ENCODE measurements at regions of chr5 and their contacts with region 1.

Region 1: GRCh38 chr5:177446200-177447065 is at the start of gene PRR7:
- DNase-seq: peak; percentile 67
- H3K4me3 ChIP-seq: peak within 1 kb of the TSS; percentile 35 to 56 (median 48)
- H3K27ac ChIP-seq: peak within 1 kb of the TSS in 3 of 4 donors; percentile 51 to 56 (median 53)
- H3K4me1 ChIP-seq: peaks cover 18 to 22% (median 20%) of the 10 kb centered on the region in 4 donors
- H3K27me3 ChIP-seq: peaks cover 23% of the 10 kb centered on the region
- CTCF ChIP-seq: no peak
- EP300 ChIP-seq: no peak
- POLR2A ChIP-seq: peak; percentile 40
- total RNA-seq, gene PRR7: 2.1 to 5.0 (median 2.5) TPM in 3 of 4 donors, not detected in the other

Region 2: GRCh38 chr5:176415952-176416924 is 1030.2 kb before region 1 on chr5 and contains the start of gene CLTB:
- in situ Hi-C with region 1: no loop called
- intact Hi-C with region 1: no loop called
- DNase-seq: peak; percentile 95
- H3K4me3 ChIP-seq: peak within 1 kb of the TSS; percentile 80 to 98 (median 88)
- H3K27ac ChIP-seq: peak within 1 kb of the TSS; percentile 93 to 97 (median 94)
- H3K4me1 ChIP-seq: peaks cover 8 to 51% (median 40%) of the 10 kb centered on the region in 4 donors
- H3K27me3 ChIP-seq: no peaks in the 10 kb centered on the region
- CTCF ChIP-seq: peak; percentile 41 to 78 (median 61)
- EP300 ChIP-seq: no peak
- POLR2A ChIP-seq: peak; percentile 42
- total RNA-seq, gene CLTB: 167 to 272 (median 265) TPM

Region 3: DNA sequence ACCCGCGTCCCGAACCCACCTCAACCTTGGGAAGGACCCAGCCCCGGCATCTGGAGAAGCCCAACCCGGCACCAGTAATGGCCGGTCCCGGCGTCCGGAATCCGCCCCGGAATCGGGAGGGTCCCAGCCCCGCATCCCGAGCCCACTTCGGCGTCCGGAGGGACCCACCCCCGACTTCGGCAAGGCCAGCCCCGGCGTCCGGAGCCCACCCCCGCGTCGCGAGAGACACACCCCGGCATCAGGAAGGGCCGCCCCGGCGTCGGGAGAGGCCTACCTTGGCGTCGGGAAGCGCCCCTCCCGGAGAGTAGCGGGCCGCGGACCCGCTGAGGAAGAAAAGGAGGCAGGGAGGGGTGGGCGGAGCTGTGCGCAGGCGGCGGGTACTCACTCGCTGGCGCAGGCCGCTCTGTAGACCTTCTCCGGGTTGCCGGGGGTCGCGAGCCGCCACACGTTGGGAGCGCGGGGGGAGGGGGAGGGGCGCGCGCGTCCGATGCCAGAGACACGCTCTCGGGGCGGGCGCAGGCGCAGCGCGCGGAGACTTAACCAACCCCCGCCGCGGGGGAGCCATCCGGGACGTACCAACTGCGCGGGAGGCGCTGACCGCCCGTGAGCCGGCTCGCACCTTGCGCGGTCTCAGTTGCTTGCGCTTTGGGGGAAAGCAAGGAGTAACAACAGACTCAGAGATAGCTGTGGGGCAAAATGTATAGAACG is 440.0 kb before region 1 on chr5 and contains the start of gene UIMC1:
- in situ Hi-C with region 1: no loop called
- intact Hi-C with region 1: no loop called
- DNase-seq: peak; percentile 94
- H3K4me3 ChIP-seq: peak within 1 kb of the TSS; percentile 66 to 99 (median 82)
- H3K27ac ChIP-seq: peak within 1 kb of the TSS; percentile 92 to 99 (median 94)
- H3K4me1 ChIP-seq: peaks cover 4 to 22% (median 16%) of the 10 kb centered on the region in 4 donors
- H3K27me3 ChIP-seq: no peaks in the 10 kb centered on the region
- CTCF ChIP-seq: no peak
- EP300 ChIP-seq: no peak
- POLR2A ChIP-seq: peak; percentile 44
- total RNA-seq, gene UIMC1: 25.1 to 213 (median 34.6) TPM

Region 4: GRCh38 chr5:177403792-177404640 is 42.4 kb before region 1 on chr5:
- in situ Hi-C with region 1: loop called in 1 of 4 experiments (anchors 10 kb)
- intact Hi-C with region 1: loop called (anchors 2 kb)
- DNase-seq: peak; percentile 92
- H3K4me3 ChIP-seq: peak overlapping the region; percentile 2 to 81 (median 47)
- H3K27ac ChIP-seq: peak overlapping the region; percentile 61 to 86 (median 74)
- H3K4me1 ChIP-seq: peaks cover 20 to 50% (median 42%) of the 10 kb centered on the region in 4 donors
- H3K27me3 ChIP-seq: peaks cover 48% of the 10 kb centered on the region
- CTCF ChIP-seq: peak; percentile 65 to 87 (median 68)
- EP300 ChIP-seq: no peak
- POLR2A ChIP-seq: no peak